ENCODE measurements at regions of chr15 and their contacts with region 1.

Region 1: DNA sequence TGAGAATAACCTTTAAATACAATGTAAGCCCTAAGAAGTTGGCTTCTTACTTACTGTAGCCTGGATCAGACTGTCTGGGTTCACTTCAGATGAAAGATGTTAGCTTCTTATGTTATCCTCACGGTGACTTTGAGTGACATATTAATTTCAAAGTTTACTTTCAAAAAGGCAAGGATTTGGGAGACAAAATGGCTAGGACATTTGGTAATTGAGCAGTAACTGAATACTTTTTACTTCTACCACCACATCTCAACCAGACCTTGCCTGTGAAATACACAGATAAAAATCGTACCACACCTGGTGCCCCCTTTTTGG is 36.0 kb upstream of the BNIP2 start:
- DNase-seq: no peak
- ATAC-seq: no peak
- H3K4me3 ChIP-seq: no peak overlapping the region
- H3K4me3 Mint-ChIP-seq: no peak overlapping the region
- H3K27ac ChIP-seq: no peak overlapping the region
- H3K27ac Mint-ChIP-seq: no peak overlapping the region
- H3K4me1 ChIP-seq: no peaks in the 10 kb centered on the region
- H3K4me1 Mint-ChIP-seq: peaks cover 4% of the 10 kb centered on the region
- H3K27me3 ChIP-seq: no peaks in the 10 kb centered on the region
- H3K27me3 Mint-ChIP-seq: peaks cover 3% of the 10 kb centered on the region
- CTCF ChIP-seq: no peak

Region 2: GRCh38 chr15:59174835-59175831 is 550.0 kb before region 1 on chr15:
- CTCF ChIA-PET with region 1: no interaction called
- POLR2A ChIA-PET with region 1: no interaction called
- intact Hi-C with region 1: no loop called
- DNase-seq: peak in 3 of 9 experiments; percentile 7 to 39 (median 39)
- ATAC-seq: peak; percentile 38
- H3K4me3 ChIP-seq: no peak overlapping the region
- H3K4me3 Mint-ChIP-seq: no peak overlapping the region
- H3K27ac ChIP-seq: no peak overlapping the region
- H3K27ac Mint-ChIP-seq: no peak overlapping the region
- H3K4me1 ChIP-seq: no peaks in the 10 kb centered on the region
- H3K4me1 Mint-ChIP-seq: no peaks in the 10 kb centered on the region
- H3K27me3 ChIP-seq: no peaks in the 10 kb centered on the region
- H3K27me3 Mint-ChIP-seq: peaks cover 4% of the 10 kb centered on the region
- CTCF ChIP-seq: no peak

Region 3: DNA sequence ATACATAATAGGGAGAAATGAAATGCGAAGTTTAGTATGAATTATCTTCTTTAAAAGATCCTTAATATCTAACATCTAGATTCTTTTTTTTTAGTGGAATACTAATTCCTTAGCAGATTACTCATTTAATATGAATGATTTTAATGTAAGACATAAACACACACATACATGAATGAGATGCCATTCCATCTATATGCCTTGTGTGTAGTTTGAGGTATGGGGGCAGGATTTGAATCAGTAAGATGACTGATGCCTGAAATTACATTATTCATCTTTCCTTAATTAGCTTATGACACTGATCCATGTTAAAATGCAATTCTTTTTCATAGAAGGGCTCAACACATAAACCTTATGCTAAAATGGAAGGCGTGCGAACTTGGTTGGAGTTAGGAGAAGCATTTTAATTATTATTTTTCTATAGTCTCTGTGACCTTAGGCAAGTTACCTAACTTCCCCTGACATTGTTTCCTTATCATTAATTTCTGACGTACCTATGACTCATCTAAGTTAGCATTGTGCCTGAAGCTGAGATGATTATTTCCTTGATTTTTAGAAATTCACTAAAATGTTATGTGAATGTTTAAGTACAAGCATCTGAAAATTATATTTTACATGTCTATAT is 25.2 kb before region 1 on chr15:
- CTCF ChIA-PET with region 1: no interaction called
- POLR2A ChIA-PET with region 1: no interaction called
- intact Hi-C with region 1: no loop called
- DNase-seq: no peak
- ATAC-seq: no peak
- H3K4me3 ChIP-seq: no peak overlapping the region
- H3K4me3 Mint-ChIP-seq: no peak overlapping the region
- H3K27ac ChIP-seq: no peak overlapping the region
- H3K27ac Mint-ChIP-seq: no peak overlapping the region
- H3K4me1 ChIP-seq: no peaks in the 10 kb centered on the region
- H3K4me1 Mint-ChIP-seq: no peaks in the 10 kb centered on the region
- H3K27me3 ChIP-seq: no peaks in the 10 kb centered on the region
- H3K27me3 Mint-ChIP-seq: peaks cover 3% of the 10 kb centered on the region
- CTCF ChIP-seq: no peak

Region 4: GRCh38 chr15:60128000-60128376 is 402.9 kb after region 1 on chr15:
- CTCF ChIA-PET with region 1: no interaction called
- POLR2A ChIA-PET with region 1: no interaction called
- intact Hi-C with region 1: loop called in 1 of 2 experiments (anchors 10 kb)
- DNase-seq: peak in 1 of 9 experiments; percentile 50
- ATAC-seq: no peak
- H3K4me3 ChIP-seq: peak overlapping the region; percentile 54 to 71
- H3K4me3 Mint-ChIP-seq: peak overlapping the region; percentile 83
- H3K27ac ChIP-seq: peak overlapping the region; percentile 70 to 86
- H3K27ac Mint-ChIP-seq: peak overlapping the region; percentile 91
- H3K4me1 ChIP-seq: peaks cover 5% of the 10 kb centered on the region
- H3K4me1 Mint-ChIP-seq: peaks cover 32% of the 10 kb centered on the region
- H3K27me3 ChIP-seq: no peaks in the 10 kb centered on the region
- H3K27me3 Mint-ChIP-seq: peaks cover 2% of the 10 kb centered on the region
- CTCF ChIP-seq: no peak

Region 5: GRCh38 chr15:60179786-60180391 is 454.8 kb after region 1 on chr15:
- CTCF ChIA-PET with region 1: interaction called, 50 read pairs
- POLR2A ChIA-PET with region 1: no interaction called
- intact Hi-C with region 1: loop called in 1 of 2 experiments (anchors 1 kb)
- DNase-seq: peak in 5 of 9 experiments; percentile 3 to 70 (median 34)
- ATAC-seq: peak; percentile 63
- H3K4me3 ChIP-seq: no peak overlapping the region
- H3K4me3 Mint-ChIP-seq: no peak overlapping the region
- H3K27ac ChIP-seq: no peak overlapping the region
- H3K27ac Mint-ChIP-seq: no peak overlapping the region
- H3K4me1 ChIP-seq: no peaks in the 10 kb centered on the region
- H3K4me1 Mint-ChIP-seq: no peaks in the 10 kb centered on the region
- H3K27me3 ChIP-seq: no peaks in the 10 kb centered on the region
- H3K27me3 Mint-ChIP-seq: peaks cover 9% of the 10 kb centered on the region
- CTCF ChIP-seq: peak; percentile 94

Region 6: DNA sequence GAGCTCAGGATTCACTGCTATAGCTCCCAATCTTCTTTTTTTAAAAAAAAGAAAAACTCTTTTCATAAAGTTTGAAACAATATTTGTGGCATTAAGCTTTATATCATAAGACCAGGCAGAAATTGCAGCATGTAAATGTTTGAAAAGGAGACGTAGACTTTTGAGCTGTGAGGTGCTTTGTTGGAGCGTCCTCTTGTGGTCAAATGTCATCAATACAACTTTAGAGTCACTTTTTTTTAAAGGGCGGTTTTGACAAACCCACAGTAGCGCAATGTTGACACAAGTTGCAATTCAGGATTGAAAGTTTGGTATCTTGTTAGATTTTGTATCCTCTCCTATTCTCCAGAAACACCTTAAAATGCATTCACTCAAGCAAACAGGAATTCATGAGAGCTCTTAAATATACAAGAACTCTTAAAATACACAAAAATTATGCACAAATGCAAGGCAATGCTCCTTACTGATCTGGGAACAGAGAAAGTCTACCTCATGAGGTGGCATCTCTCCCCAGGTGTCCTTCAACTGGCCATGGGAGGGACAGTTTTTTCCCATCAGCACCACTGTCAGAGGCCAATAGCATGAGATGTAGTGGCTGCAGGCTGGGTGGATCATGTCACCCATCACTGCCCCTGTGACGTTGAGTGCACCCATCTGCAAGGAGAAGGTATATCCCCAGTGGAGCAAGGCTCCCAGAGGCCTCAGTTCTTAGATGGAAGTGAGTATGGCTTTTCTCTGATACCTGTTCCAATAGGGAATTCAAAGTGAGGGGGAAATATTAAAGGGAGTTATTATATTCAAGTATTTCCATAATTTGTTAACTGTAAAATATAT is 601.9 kb after region 1 on chr15:
- CTCF ChIA-PET with region 1: interaction called, 25 read pairs
- POLR2A ChIA-PET with region 1: no interaction called
- intact Hi-C with region 1: loop called (anchors 1 kb)
- DNase-seq: peak in 5 of 9 experiments; percentile 8 to 72 (median 32)
- ATAC-seq: peak; percentile 40
- H3K4me3 ChIP-seq: no peak overlapping the region
- H3K4me3 Mint-ChIP-seq: no peak overlapping the region
- H3K27ac ChIP-seq: no peak overlapping the region
- H3K27ac Mint-ChIP-seq: no peak overlapping the region
- H3K4me1 ChIP-seq: no peaks in the 10 kb centered on the region
- H3K4me1 Mint-ChIP-seq: peaks cover 2% of the 10 kb centered on the region
- H3K27me3 ChIP-seq: peaks cover 0 to 5% of the 10 kb centered on the region in 2 experiments
- H3K27me3 Mint-ChIP-seq: peaks cover 34% of the 10 kb centered on the region
- CTCF ChIP-seq: peak; percentile 73

Measured in CD8-positive, alpha-beta T cell (primary cell).